Activated T-helper 2 cell treated with anti-CD3 and anti-CD28 coated beads, Interferon-gamma antibody, Interleukin-2, Interleukin-4, amounts not matched to agents 10 μg/mL and 5 μg/mL and 100 μg/mL, durations not matched to agents 14 hours and 24 hours and 36 hours (primary cell): ENCODE measurements at regions of chr6 and their contacts with region 1.

Region 1: GRCh38 chr6:7238900-7239589 is 74.0 kb downstream of the SSR1 start:
- DNase-seq: peak; percentile 55
- H3K4me3 Mint-ChIP-seq: no peak overlapping the region
- H3K27ac Mint-ChIP-seq: no peak overlapping the region
- H3K4me1 Mint-ChIP-seq: peaks cover 14% of the 10 kb centered on the region
- H3K27me3 Mint-ChIP-seq: no peaks in the 10 kb centered on the region

Region 2: DNA sequence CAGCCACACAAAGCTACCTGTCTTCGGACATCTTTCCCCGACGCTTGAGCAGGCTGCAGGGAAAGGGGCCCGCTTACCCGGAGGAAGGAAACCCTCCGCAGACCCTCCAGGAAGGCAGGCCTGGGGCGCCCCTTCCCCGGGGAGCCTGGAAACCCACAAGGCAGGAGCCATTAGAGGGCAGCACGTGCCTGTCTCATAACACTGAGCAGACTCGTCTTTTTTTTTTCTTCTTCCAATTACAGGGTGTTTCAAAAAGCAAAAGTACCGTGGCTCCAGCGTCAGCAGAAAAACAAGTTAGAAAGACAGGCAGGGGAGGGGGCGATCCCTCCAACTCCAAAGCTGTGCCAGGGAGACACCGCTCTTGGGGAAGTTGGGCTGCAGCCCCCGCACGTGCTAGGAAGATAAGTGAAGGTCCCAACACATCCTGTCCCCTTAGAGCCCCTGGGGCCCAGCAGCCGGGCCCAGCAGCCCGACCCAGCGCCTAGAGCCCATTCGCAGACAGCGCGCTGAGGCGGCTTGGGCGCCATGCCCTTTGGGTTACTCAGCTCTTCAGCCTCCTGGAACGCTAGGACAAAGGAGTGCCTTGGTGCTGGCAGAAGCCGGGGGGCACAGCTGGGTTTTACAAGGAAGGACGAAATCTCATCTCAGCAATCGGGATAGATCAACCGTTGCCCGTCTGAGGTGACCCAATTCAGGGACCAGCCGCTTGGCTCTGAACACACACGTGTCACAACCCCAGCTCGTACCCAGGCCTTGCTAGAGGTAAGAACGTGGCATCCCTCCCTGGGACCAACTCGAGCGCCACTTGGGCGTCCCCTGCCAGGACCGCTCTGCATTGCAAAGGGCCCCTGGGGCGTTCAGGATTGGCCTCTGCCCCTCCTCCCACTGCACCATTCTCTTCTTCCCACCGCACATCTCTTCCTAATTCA is 514.2 kb before region 1 on chr6:
- intact Hi-C with region 1: loop called (anchors 2 kb)
- DNase-seq: peak; percentile 41
- H3K4me3 Mint-ChIP-seq: peak overlapping the region; percentile 19
- H3K27ac Mint-ChIP-seq: no peak overlapping the region
- H3K4me1 Mint-ChIP-seq: peaks cover 6% of the 10 kb centered on the region
- H3K27me3 Mint-ChIP-seq: peaks cover 29% of the 10 kb centered on the region

Region 3: DNA sequence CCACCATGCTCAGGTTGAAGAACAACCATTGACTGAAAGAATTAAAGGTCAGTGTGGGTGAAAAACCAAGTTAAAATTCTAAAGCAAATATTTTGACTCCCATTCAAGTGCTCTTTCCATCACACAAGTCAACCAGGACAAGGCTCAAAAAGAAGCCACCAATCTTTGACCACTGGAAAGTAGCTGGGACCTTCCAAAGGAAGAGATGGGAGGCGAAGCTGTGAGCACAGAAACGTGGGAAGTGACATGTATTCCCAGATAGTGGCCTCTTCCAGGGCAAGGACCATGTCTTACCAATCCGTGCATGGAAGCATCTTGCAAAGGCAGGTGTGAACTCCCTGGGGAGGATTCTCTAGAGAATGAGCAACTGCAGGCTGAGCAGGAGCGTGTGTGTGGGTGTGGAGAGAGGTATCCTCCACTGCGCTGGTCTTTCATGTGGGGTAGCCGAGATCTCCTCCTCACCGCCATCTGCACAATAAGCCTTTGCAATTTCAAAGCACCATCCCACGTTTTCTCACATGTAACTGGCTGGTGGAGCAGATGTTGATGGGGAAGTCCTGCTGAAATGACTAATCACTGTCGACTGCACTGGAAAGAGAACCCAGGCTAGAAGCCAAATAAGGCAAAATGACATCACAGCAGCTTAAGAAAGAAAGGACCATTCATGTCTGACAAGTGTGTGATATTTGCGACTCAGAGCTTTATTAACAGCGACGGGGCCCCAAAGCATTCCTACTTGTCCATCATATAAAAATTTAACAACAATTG is 320.6 kb before region 1 on chr6:
- intact Hi-C with region 1: loop called (anchors 10 kb)
- DNase-seq: peak; percentile 24
- H3K4me3 Mint-ChIP-seq: no peak overlapping the region
- H3K27ac Mint-ChIP-seq: peak overlapping the region; percentile 16
- H3K4me1 Mint-ChIP-seq: peaks cover 24% of the 10 kb centered on the region
- H3K27me3 Mint-ChIP-seq: peaks cover 31% of the 10 kb centered on the region

Region 4: DNA sequence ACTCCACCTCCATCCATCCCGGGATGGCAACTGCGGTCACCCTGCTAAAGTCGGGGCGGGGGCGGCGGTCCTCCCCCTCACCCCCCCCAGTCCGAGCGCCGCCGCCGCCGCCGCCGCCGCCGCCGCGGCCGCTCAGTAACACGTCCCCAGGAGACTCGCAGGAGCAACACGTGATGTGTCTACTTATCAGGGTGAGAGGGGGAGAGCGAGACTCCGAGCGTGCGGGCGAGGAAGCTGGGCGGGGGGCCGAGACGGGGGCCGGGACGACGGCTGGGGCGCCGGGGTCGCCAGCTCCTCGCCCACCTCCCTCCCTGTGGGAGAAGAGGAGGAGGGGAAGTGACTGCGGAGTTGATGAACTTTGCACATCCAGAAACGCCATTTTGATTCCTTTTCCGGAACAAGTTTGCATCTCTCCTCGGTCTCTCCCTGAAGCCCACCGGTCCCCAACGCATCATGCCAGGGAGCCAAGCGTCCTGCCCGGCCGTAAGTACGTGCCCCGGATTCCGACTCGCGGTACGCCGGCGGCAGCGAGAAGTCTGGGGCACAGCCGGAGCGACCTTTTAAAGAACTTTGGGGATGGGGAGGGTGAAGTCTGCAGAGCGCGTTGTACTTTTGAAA is 131.4 kb before region 1 on chr6 and contains the start of gene RREB1:
- intact Hi-C with region 1: loop called (anchors 5 kb)
- DNase-seq: peak; percentile 54
- H3K4me3 Mint-ChIP-seq: peak within 1 kb of the TSS; percentile 92
- H3K27ac Mint-ChIP-seq: peak within 1 kb of the TSS; percentile 95
- H3K4me1 Mint-ChIP-seq: peaks cover 43% of the 10 kb centered on the region
- H3K27me3 Mint-ChIP-seq: peaks cover 2% of the 10 kb centered on the region
- total RNA-seq, gene RREB1: 23.1 and 23.6 TPM in 2 replicates